ENCODE measurements at regions of chr7 and their contacts with region 1.

Region 1: GRCh38 chr7:97835296-97836138 is 36.7 kb downstream of the ASNS start:
- DNase-seq: peak; percentile 8 to 53 (median 37)
- ATAC-seq: peak; percentile 69
- H3K4me3 ChIP-seq: no peak overlapping the region
- H3K4me3 Mint-ChIP-seq: no peak overlapping the region
- H3K27ac ChIP-seq: no peak overlapping the region
- H3K27ac Mint-ChIP-seq: no peak overlapping the region
- H3K4me1 ChIP-seq: no peaks in the 10 kb centered on the region
- H3K4me1 Mint-ChIP-seq: peaks cover 0 to 2% (median 0%) of the 10 kb centered on the region in 7 donors
- H3K27me3 ChIP-seq: no peaks in the 10 kb centered on the region
- H3K27me3 Mint-ChIP-seq: peaks cover 24 to 41% (median 37%) of the 10 kb centered on the region in 5 donors

Region 2: DNA sequence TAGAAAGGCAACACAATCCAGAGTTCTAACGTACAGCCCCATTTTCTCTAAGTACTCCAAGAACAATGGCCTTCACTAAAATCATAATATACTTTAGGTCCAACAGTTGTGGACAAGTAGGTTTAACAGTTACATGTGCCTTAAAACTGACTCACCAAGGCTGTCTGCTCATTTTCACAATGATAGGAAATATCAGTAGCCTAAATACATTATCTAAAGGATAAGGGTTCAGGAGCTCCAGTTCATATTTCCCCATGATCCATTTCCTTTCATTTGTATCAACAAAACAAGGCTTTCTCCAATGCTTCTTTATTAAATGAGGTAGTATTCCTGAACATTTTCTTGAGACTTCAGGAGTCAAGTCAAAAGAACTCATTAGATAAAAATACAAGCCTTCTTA is 1677.7 kb before region 1 on chr7:
- CTCF ChIA-PET with region 1: no interaction called
- POLR2A ChIA-PET with region 1: no interaction called
- intact Hi-C with region 1: no loop called
- DNase-seq: no peak
- ATAC-seq: no peak
- H3K4me3 ChIP-seq: no peak overlapping the region
- H3K4me3 Mint-ChIP-seq: no peak overlapping the region
- H3K27ac ChIP-seq: no peak overlapping the region
- H3K27ac Mint-ChIP-seq: no peak overlapping the region
- H3K4me1 ChIP-seq: no peaks in the 10 kb centered on the region
- H3K4me1 Mint-ChIP-seq: no peaks in the 10 kb centered on the region
- H3K27me3 ChIP-seq: no peaks in the 10 kb centered on the region
- H3K27me3 Mint-ChIP-seq: no peaks in the 10 kb centered on the region

Region 3: GRCh38 chr7:97104719-97105238 is 730.7 kb before region 1 on chr7:
- CTCF ChIA-PET with region 1: no interaction called
- POLR2A ChIA-PET with region 1: no interaction called
- intact Hi-C with region 1: loop called in 1 of 2 experiments (anchors 1 kb)
- DNase-seq: peak; percentile 13 to 66 (median 33)
- ATAC-seq: peak; percentile 76
- H3K4me3 ChIP-seq: no peak overlapping the region
- H3K4me3 Mint-ChIP-seq: no peak overlapping the region
- H3K27ac ChIP-seq: no peak overlapping the region
- H3K27ac Mint-ChIP-seq: no peak overlapping the region
- H3K4me1 ChIP-seq: no peaks in the 10 kb centered on the region
- H3K4me1 Mint-ChIP-seq: no peaks in the 10 kb centered on the region
- H3K27me3 ChIP-seq: no peaks in the 10 kb centered on the region
- H3K27me3 Mint-ChIP-seq: peaks cover 8 to 45% (median 34%) of the 10 kb centered on the region in 5 donors

Region 4: GRCh38 chr7:97145068-97145467 is 690.4 kb before region 1 on chr7:
- CTCF ChIA-PET with region 1: no interaction called
- POLR2A ChIA-PET with region 1: no interaction called
- intact Hi-C with region 1: loop called (anchors 1 kb)
- DNase-seq: peak in 4 of 9 donors; percentile 9 to 22 (median 14)
- ATAC-seq: no peak
- H3K4me3 ChIP-seq: no peak overlapping the region
- H3K4me3 Mint-ChIP-seq: no peak overlapping the region
- H3K27ac ChIP-seq: no peak overlapping the region
- H3K27ac Mint-ChIP-seq: no peak overlapping the region
- H3K4me1 ChIP-seq: no peaks in the 10 kb centered on the region
- H3K4me1 Mint-ChIP-seq: peaks cover 0 to 9% (median 4%) of the 10 kb centered on the region in 7 donors
- H3K27me3 ChIP-seq: no peaks in the 10 kb centered on the region
- H3K27me3 Mint-ChIP-seq: no peaks in the 10 kb centered on the region

Region 5: DNA sequence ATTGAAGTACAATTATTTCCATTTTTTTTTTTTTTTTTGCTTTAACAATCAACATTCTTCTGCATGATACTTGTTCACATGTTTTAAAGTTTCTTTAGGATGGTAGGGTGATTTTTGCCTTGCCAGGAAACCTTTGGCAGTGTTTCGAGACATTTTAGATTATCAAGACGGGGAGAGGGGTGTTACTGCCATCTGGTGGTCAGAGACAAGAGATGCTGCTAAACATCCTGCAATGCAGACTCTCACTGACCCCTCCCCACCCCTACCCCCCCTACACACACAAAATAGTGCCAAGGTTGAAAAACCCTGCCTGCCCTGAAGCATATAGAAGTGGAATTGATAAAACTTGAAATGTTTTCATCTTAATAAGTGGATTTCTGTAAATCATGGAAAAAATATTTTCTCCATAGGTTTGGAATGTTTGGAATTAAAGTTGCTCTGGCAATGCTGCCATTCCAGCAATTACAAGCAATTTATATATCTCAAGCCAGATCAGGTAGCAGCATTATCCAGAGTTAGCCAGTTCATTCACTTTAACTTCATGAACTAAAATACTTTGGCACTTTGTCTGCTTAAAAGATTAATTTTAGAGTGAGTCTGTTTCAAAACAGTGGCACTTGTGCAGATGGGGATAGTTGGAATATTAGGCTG is 655.9 kb before region 1 on chr7:
- CTCF ChIA-PET with region 1: no interaction called
- POLR2A ChIA-PET with region 1: no interaction called
- intact Hi-C with region 1: loop called in 1 of 2 experiments (anchors 1 kb)
- DNase-seq: peak in 7 of 9 donors; percentile 18 to 63 (median 53)
- ATAC-seq: peak; percentile 88
- H3K4me3 ChIP-seq: no peak overlapping the region
- H3K4me3 Mint-ChIP-seq: no peak overlapping the region
- H3K27ac ChIP-seq: no peak overlapping the region
- H3K27ac Mint-ChIP-seq: no peak overlapping the region
- H3K4me1 ChIP-seq: no peaks in the 10 kb centered on the region
- H3K4me1 Mint-ChIP-seq: peaks cover 0 to 4% (median 0%) of the 10 kb centered on the region in 7 donors
- H3K27me3 ChIP-seq: no peaks in the 10 kb centered on the region
- H3K27me3 Mint-ChIP-seq: no peaks in the 10 kb centered on the region

Region 6: DNA sequence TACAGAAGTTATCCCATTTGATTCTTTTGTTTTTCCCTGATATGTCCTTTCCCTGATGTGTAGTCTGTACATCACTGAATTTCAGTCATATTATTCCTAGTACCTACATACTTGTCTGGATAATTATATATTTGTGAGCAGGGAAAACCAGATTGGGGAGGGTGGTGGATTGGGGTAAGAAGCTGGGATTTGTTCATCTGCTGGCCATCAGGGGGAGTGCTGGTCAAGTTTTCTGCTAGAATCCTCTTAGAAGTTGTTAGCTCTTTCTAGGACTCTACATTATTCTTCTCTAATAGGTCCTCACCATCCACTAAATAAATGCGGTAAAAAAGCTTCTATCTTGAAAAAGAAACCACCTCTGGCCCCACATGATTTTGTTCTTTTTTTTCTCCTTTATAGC is 336.3 kb before region 1 on chr7:
- CTCF ChIA-PET with region 1: no interaction called
- POLR2A ChIA-PET with region 1: no interaction called
- intact Hi-C with region 1: loop called (anchors 2 to 10 kb)
- DNase-seq: peak in 1 of 9 donors; percentile 1
- ATAC-seq: no peak
- H3K4me3 ChIP-seq: no peak overlapping the region
- H3K4me3 Mint-ChIP-seq: no peak overlapping the region
- H3K27ac ChIP-seq: no peak overlapping the region
- H3K27ac Mint-ChIP-seq: no peak overlapping the region
- H3K4me1 ChIP-seq: no peaks in the 10 kb centered on the region
- H3K4me1 Mint-ChIP-seq: no peaks in the 10 kb centered on the region
- H3K27me3 ChIP-seq: no peaks in the 10 kb centered on the region
- H3K27me3 Mint-ChIP-seq: peaks cover 0 to 12% (median 8%) of the 10 kb centered on the region in 5 donors

Region 7: DNA sequence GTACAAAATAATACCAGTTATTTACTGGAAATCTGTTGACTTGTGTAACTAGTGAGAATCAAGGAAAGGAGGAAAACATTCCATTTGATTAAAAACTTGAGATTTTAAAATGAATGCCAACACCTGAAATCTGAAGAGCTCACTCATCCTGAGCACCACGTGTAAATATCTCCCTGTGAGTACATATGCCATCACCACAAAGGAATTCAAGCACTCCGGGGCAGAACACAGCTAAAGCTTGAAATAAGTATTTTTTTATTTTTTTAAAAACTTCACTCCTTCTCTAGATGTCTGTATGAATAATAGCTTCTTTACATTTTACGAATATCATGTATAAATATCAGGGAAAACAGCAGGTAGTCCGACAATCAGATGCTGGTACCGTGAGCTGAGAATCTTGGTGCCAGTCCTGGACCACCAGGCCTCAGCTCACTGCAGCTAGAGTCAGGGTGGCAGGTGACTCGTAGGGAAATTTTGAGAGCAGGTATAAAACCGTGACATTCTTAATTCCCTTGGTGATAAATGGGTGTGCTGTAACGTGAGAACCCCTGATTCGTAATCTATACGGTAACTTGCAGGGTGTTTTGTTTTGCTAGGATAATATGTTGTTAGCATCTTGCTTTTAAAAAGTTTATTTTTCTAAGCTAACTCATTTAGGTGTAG is 283.9 kb after region 1 on chr7:
- CTCF ChIA-PET with region 1: no interaction called
- POLR2A ChIA-PET with region 1: no interaction called
- intact Hi-C with region 1: no loop called
- DNase-seq: no peak
- ATAC-seq: no peak
- H3K4me3 ChIP-seq: no peak overlapping the region
- H3K4me3 Mint-ChIP-seq: no peak overlapping the region
- H3K27ac ChIP-seq: no peak overlapping the region
- H3K27ac Mint-ChIP-seq: no peak overlapping the region
- H3K4me1 ChIP-seq: no peaks in the 10 kb centered on the region
- H3K4me1 Mint-ChIP-seq: peaks cover 2 to 74% (median 55%) of the 10 kb centered on the region in 7 donors
- H3K27me3 ChIP-seq: no peaks in the 10 kb centered on the region
- H3K27me3 Mint-ChIP-seq: no peaks in the 10 kb centered on the region

Region 8: GRCh38 chr7:98922393-98923187 is 1087.1 kb after region 1 on chr7:
- CTCF ChIA-PET with region 1: no interaction called
- POLR2A ChIA-PET with region 1: no interaction called
- intact Hi-C with region 1: no loop called
- DNase-seq: no peak
- ATAC-seq: no peak
- H3K4me3 ChIP-seq: no peak overlapping the region
- H3K4me3 Mint-ChIP-seq: no peak overlapping the region
- H3K27ac ChIP-seq: no peak overlapping the region
- H3K27ac Mint-ChIP-seq: peak overlapping the region in 1 of 9 donors; percentile 16
- H3K4me1 ChIP-seq: no peaks in the 10 kb centered on the region
- H3K4me1 Mint-ChIP-seq: peaks cover 0 to 12% (median 0%) of the 10 kb centered on the region in 7 donors
- H3K27me3 ChIP-seq: no peaks in the 10 kb centered on the region
- H3K27me3 Mint-ChIP-seq: no peaks in the 10 kb centered on the region

Measured in naive thymus-derived CD4-positive, alpha-beta T cell (primary cell).